ENCODE measurements at regions of chr6 and their contacts with region 1.

Region 1: GRCh38 chr6:71383901-71384489 is 95.4 kb downstream of the OGFRL1 start:
- DNase-seq: peak in 1 of 2 donors; percentile 73
- H3K4me3 ChIP-seq: no peak overlapping the region
- H3K27ac ChIP-seq: no peak overlapping the region
- H3K4me1 ChIP-seq: peaks cover 5 to 52% (median 27%) of the 10 kb centered on the region in 4 donors
- H3K27me3 ChIP-seq: no peaks in the 10 kb centered on the region
- CTCF ChIP-seq: peak in 5 of 7 experiments; percentile 23 to 65 (median 56)
- EP300 ChIP-seq: no peak
- POLR2A ChIP-seq: no peak

Region 2: GRCh38 chr6:71171497-71172070 is 212.4 kb before region 1 on chr6:
- intact Hi-C with region 1: no loop called
- DNase-seq: peak in 1 of 2 donors; percentile 52
- H3K4me3 ChIP-seq: no peak overlapping the region
- H3K27ac ChIP-seq: no peak overlapping the region
- H3K4me1 ChIP-seq: peaks cover 0 to 12% (median 4%) of the 10 kb centered on the region in 4 donors
- H3K27me3 ChIP-seq: no peaks in the 10 kb centered on the region
- CTCF ChIP-seq: no peak
- EP300 ChIP-seq: no peak
- POLR2A ChIP-seq: no peak

Region 3: GRCh38 chr6:71460933-71461332 is 76.9 kb after region 1 on chr6:
- intact Hi-C with region 1: no loop called
- DNase-seq: no peak
- H3K4me3 ChIP-seq: no peak overlapping the region
- H3K27ac ChIP-seq: no peak overlapping the region
- H3K4me1 ChIP-seq: no peaks in the 10 kb centered on the region
- H3K27me3 ChIP-seq: no peaks in the 10 kb centered on the region
- CTCF ChIP-seq: no peak
- EP300 ChIP-seq: no peak
- POLR2A ChIP-seq: no peak

Region 4: GRCh38 chr6:71510057-71510713 is 126.2 kb after region 1 on chr6:
- intact Hi-C with region 1: loop called (anchors 5 kb)
- DNase-seq: peak; percentile 43 to 76
- H3K4me3 ChIP-seq: no peak overlapping the region
- H3K27ac ChIP-seq: no peak overlapping the region
- H3K4me1 ChIP-seq: peaks cover 0 to 19% (median 7%) of the 10 kb centered on the region in 4 donors
- H3K27me3 ChIP-seq: no peaks in the 10 kb centered on the region
- CTCF ChIP-seq: peak in 5 of 7 experiments; percentile 36 to 59 (median 51)
- EP300 ChIP-seq: no peak
- POLR2A ChIP-seq: no peak

Measured in stomach (tissue), 19 donors.